ENCODE measurements at regions of chr17 and their contacts with region 1.

Region 1: GRCh38 chr17:28335201-28335955 is at the starts of genes IFT20 and TNFAIP1:
- DNase-seq: peak; percentile 100
- H3K4me3 ChIP-seq: peak within 1 kb of the TSS; percentile 77 to 91 (median 89)
- H3K27ac ChIP-seq: peak within 1 kb of the TSS; percentile 98
- H3K4me1 ChIP-seq: peaks cover 42% of the 10 kb centered on the region
- H3K27me3 ChIP-seq: no peaks in the 10 kb centered on the region
- CTCF ChIP-seq: no peak
- total RNA-seq, gene IFT20: 22.0 to 26.1 TPM
- total RNA-seq, gene TNFAIP1: 103 to 108 TPM

Region 2: DNA sequence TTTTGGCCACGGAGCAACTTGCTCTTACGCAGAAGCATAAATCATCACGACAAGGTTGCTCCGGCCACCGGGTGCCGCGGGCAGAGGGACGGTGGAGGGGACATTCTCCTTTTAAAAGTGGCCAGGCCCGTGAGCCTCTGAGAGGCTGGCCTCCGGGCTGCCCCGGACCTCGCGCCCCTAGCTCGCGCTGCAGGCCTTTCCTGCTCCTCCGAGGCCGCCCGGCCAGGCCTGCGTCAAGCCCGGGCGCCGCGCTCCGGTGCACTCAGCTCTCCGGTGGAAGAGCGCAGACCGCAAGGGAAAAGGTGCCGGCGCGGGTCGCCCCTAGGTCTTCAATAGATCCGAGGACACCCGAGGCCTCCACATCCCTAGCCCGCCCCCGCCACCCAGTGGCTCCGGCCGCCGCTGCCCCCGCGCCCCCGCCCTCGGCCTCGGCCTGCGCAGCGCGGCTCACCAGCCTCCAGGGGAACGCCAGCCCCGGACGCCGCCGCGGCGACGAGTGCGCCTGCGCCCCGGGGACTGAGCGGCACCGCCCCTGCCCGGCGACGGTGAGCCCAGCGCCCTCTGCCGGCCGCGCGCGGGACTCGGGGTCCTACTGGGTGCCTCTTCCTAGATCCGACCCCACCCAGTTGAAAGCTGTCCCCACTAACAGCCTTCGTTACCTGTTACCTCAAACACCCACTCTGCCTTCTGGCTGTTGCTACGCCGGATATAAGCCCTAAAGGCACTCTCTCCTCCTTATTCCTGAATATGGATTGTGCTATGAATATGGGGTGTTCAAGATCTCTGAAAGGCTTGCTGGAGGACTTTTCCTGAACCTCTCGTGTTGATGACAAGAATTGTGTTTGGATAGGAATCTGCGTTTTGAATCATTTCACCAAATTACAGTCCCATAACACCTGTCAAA is 442.3 kb before region 1 on chr17 and contains the start of gene LYRM9:
- CTCF ChIA-PET with region 1: no interaction called
- dilution Hi-C with region 1: no loop called
- in situ Hi-C with region 1: loop called in 1 of 2 experiments (anchors 25 kb)
- intact Hi-C with region 1: loop called (anchors 10 kb)
- DNase-seq: peak; percentile 78
- H3K4me3 ChIP-seq: peak within 1 kb of the TSS; percentile 54 to 68 (median 58)
- H3K27ac ChIP-seq: no peak within 1 kb of the TSS
- H3K4me1 ChIP-seq: no peaks in the 10 kb centered on the region
- H3K27me3 ChIP-seq: no peaks in the 10 kb centered on the region
- CTCF ChIP-seq: peak; percentile 74 to 78
- total RNA-seq, gene LYRM9: 4.3 to 9.8 TPM

Region 3: GRCh38 chr17:28227316-28228125 is 107.9 kb before region 1 on chr17:
- CTCF ChIA-PET with region 1: no interaction called
- dilution Hi-C with region 1: no loop called
- in situ Hi-C with region 1: no loop called
- intact Hi-C with region 1: loop called (anchors 2 kb)
- DNase-seq: peak; percentile 73
- H3K4me3 ChIP-seq: peak overlapping the region; percentile 38 to 53 (median 49)
- H3K27ac ChIP-seq: no peak overlapping the region
- H3K4me1 ChIP-seq: peaks cover 16% of the 10 kb centered on the region
- H3K27me3 ChIP-seq: no peaks in the 10 kb centered on the region
- CTCF ChIP-seq: peak in 1 of 2 donors; percentile 16

Region 4: GRCh38 chr17:28295677-28296578 is 39.5 kb before region 1 on chr17:
- CTCF ChIA-PET with region 1: no interaction called
- dilution Hi-C with region 1: no loop called
- in situ Hi-C with region 1: no loop called
- intact Hi-C with region 1: no loop called
- DNase-seq: no peak
- H3K4me3 ChIP-seq: no peak overlapping the region
- H3K27ac ChIP-seq: no peak overlapping the region
- H3K4me1 ChIP-seq: no peaks in the 10 kb centered on the region
- H3K27me3 ChIP-seq: peaks cover 2% of the 10 kb centered on the region
- CTCF ChIP-seq: no peak

Region 5: DNA sequence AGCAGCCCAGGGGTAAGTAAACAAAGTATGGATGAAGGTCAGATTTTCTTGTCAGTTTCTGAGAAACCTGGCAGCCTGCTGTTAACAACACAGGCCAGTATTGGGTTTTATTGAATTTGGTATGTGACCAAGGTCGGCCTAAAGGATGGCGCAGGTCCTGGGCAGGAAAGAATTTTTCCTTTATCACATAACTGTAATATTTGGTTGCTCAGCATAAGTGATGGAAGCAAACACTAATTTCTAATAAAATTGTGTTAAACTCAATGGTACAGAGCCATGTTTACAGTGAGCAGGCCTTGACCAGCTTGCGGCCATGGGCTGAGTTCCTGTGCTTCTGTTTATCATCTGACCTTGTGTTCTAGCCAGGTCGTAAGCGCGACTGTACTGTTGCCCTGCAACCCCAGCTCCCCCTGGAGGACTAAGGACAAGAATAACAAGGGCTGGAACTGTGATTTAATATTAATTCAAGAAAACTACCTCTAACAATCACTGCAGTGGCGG is 11.4 kb after region 1 on chr17:
- CTCF ChIA-PET with region 1: interaction called, 4 read pairs
- dilution Hi-C with region 1: no loop called
- in situ Hi-C with region 1: no loop called
- intact Hi-C with region 1: loop called (anchors 1 kb)
- DNase-seq: no peak
- H3K4me3 ChIP-seq: no peak overlapping the region
- H3K27ac ChIP-seq: peak overlapping the region; percentile 47
- H3K4me1 ChIP-seq: peaks cover 33% of the 10 kb centered on the region
- H3K27me3 ChIP-seq: no peaks in the 10 kb centered on the region
- CTCF ChIP-seq: peak in 1 of 2 donors; percentile 33

Region 6: GRCh38 chr17:28405632-28406472 is 70.5 kb after region 1 on chr17 and contains the start of gene SLC46A1:
- CTCF ChIA-PET with region 1: interaction called, 6 read pairs
- dilution Hi-C with region 1: no loop called
- in situ Hi-C with region 1: no loop called
- intact Hi-C with region 1: loop called (anchors 2 kb)
- DNase-seq: peak; percentile 23
- H3K4me3 ChIP-seq: peak within 1 kb of the TSS; percentile 49 to 73 (median 68)
- H3K27ac ChIP-seq: peak within 1 kb of the TSS; percentile 62
- H3K4me1 ChIP-seq: peaks cover 52% of the 10 kb centered on the region
- H3K27me3 ChIP-seq: no peaks in the 10 kb centered on the region
- CTCF ChIP-seq: no peak
- total RNA-seq, gene SLC46A1: 15.3 to 47.8 TPM

Region 7: GRCh38 chr17:28540231-28540630 is 204.9 kb after region 1 on chr17:
- CTCF ChIA-PET with region 1: no interaction called
- dilution Hi-C with region 1: no loop called
- in situ Hi-C with region 1: no loop called
- intact Hi-C with region 1: loop called (anchors 5 kb)
- DNase-seq: no peak
- H3K4me3 ChIP-seq: no peak overlapping the region
- H3K27ac ChIP-seq: no peak overlapping the region
- H3K4me1 ChIP-seq: no peaks in the 10 kb centered on the region
- H3K27me3 ChIP-seq: no peaks in the 10 kb centered on the region
- CTCF ChIP-seq: no peak

Measured in mammary epithelial cell (primary cell).